Pancreas (tissue), 10 donors: ENCODE measurements at regions of chr11 and their contacts with region 1.

Region 1: GRCh38 chr11:73242251-73243079 is 24.4 kb downstream of the P2RY2 start:
- DNase-seq: peak; percentile 49 to 90 (median 80)
- ATAC-seq: peak; percentile 91 to 96 (median 94)
- H3K4me3 ChIP-seq: peak overlapping the region in 2 of 4 donors; percentile 31
- H3K27ac ChIP-seq: no peak overlapping the region
- H3K4me1 ChIP-seq: no peaks in the 10 kb centered on the region
- H3K27me3 ChIP-seq: no peaks in the 10 kb centered on the region
- CTCF ChIP-seq: peak; percentile 78 to 94 (median 87)

Region 2: GRCh38 chr11:72821883-72822799 is 420.3 kb before region 1 on chr11:
- intact Hi-C with region 1: loop called in 1 of 3 experiments (anchors 10 kb)
- DNase-seq: peak; percentile 84 to 96 (median 94)
- ATAC-seq: peak; percentile 91 to 92 (median 92)
- H3K4me3 ChIP-seq: peak overlapping the region; percentile 26 to 64 (median 47)
- H3K27ac ChIP-seq: peak overlapping the region in 3 of 4 donors; percentile 39 to 58 (median 55)
- H3K4me1 ChIP-seq: peaks cover 0 to 6% (median 6%) of the 10 kb centered on the region in 3 donors
- H3K27me3 ChIP-seq: no peaks in the 10 kb centered on the region
- CTCF ChIP-seq: peak in 1 of 4 donors; percentile 21

Region 3: GRCh38 chr11:73307323-73308002 is 65.0 kb after region 1 on chr11:
- intact Hi-C with region 1: no loop called
- DNase-seq: peak; percentile 92 to 99 (median 97)
- ATAC-seq: peak; percentile 78 to 84 (median 81)
- H3K4me3 ChIP-seq: peak overlapping the region; percentile 40 to 64 (median 56)
- H3K27ac ChIP-seq: peak overlapping the region; percentile 85 to 93 (median 89)
- H3K4me1 ChIP-seq: peaks cover 0 to 6% (median 0%) of the 10 kb centered on the region in 3 donors
- H3K27me3 ChIP-seq: no peaks in the 10 kb centered on the region
- CTCF ChIP-seq: peak; percentile 63 to 72 (median 66)